CD4-positive, alpha-beta memory T cell (primary cell): ENCODE measurements at regions of chr7 and their contacts with region 1.

Region 1: DNA sequence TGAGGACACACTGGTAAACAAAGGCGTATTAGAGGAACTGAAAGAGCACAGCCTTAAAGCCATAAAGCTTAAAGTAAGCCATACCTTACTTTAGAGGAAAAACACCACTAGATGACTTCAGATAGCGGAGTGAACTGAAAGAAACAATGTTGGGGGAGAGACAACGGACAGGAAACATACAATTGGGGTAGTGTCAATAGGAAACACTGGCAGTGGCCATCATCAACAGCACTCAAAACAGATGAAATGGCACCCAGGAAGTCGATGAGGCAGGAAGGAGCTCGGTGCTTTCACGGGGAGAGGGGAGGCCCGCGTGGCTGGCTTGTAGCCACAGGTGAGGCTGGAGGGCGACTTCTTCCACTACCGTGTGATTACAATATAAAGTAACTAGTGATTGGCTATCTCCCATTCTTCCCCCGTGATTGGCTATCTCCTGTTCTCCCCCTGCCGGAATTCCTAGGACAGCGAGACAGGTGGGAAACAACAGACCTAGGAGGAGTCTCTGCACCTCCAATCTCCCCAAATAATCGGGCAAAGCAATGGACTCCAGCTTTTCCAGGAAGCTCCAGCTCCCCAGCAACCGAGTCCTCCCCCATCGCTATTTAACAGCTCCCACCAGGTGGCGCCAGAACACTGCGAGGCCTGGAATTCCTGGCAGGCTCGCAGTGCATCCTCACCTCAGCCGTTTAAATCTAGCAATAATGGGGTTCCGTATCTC is 2.4 kb upstream of the TAS2R38 start:
- DNase-seq: peak; percentile 33 to 54 (median 51)
- H3K4me3 ChIP-seq: peak overlapping the region; percentile 24 to 49
- H3K4me3 Mint-ChIP-seq: peak overlapping the region; percentile 47 to 85 (median 81)
- H3K27ac ChIP-seq: no peak overlapping the region
- H3K27ac Mint-ChIP-seq: peak overlapping the region in 6 of 7 donors; percentile 0 to 86 (median 50)
- H3K4me1 ChIP-seq: peaks cover 9% of the 10 kb centered on the region
- H3K4me1 Mint-ChIP-seq: peaks cover 5 to 18% (median 9%) of the 10 kb centered on the region in 4 donors
- H3K27me3 ChIP-seq: no peaks in the 10 kb centered on the region
- H3K27me3 Mint-ChIP-seq: no peaks in the 10 kb centered on the region

Region 2: GRCh38 chr7:141960687-141961422 is 15.1 kb before region 1 on chr7:
- CTCF ChIA-PET with region 1: interaction called, 21 read pairs
- POLR2A ChIA-PET with region 1: no interaction called
- intact Hi-C with region 1: no loop called
- DNase-seq: no peak
- H3K4me3 ChIP-seq: no peak overlapping the region
- H3K4me3 Mint-ChIP-seq: no peak overlapping the region
- H3K27ac ChIP-seq: no peak overlapping the region
- H3K27ac Mint-ChIP-seq: no peak overlapping the region
- H3K4me1 ChIP-seq: no peaks in the 10 kb centered on the region
- H3K4me1 Mint-ChIP-seq: no peaks in the 10 kb centered on the region
- H3K27me3 ChIP-seq: no peaks in the 10 kb centered on the region
- H3K27me3 Mint-ChIP-seq: peaks cover 0 to 2% of the 10 kb centered on the region in 2 donors

Region 3: DNA sequence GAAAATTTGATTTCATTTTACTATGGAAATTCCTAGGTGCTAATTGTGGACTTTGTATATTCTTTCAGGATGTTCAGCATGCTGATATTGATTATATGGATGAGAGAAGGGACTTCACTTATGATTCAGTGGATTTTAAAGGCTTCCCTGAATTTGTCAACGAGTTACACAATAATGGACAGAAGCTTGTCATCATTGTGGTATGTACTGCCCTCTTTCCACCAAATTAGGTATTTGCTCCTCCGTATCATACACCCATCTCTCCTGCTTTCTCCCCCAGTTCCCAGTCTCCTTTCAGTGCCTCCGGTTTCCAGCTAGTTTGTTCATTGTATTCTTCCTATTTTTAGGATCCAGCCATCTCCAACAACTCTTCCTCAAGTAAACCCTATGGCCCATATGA is 54.3 kb after region 1 on chr7:
- CTCF ChIA-PET with region 1: interaction called, 12 read pairs
- POLR2A ChIA-PET with region 1: no interaction called
- intact Hi-C with region 1: no loop called
- DNase-seq: no peak
- H3K4me3 ChIP-seq: no peak overlapping the region
- H3K4me3 Mint-ChIP-seq: no peak overlapping the region
- H3K27ac ChIP-seq: no peak overlapping the region
- H3K27ac Mint-ChIP-seq: no peak overlapping the region
- H3K4me1 ChIP-seq: no peaks in the 10 kb centered on the region
- H3K4me1 Mint-ChIP-seq: no peaks in the 10 kb centered on the region
- H3K27me3 ChIP-seq: no peaks in the 10 kb centered on the region
- H3K27me3 Mint-ChIP-seq: peaks cover 2 to 9% of the 10 kb centered on the region in 2 donors

Region 4: GRCh38 chr7:142188846-142189245 is 212.9 kb after region 1 on chr7:
- CTCF ChIA-PET with region 1: no interaction called
- POLR2A ChIA-PET with region 1: no interaction called
- intact Hi-C with region 1: loop called (anchors 5 kb)
- DNase-seq: no peak
- H3K4me3 ChIP-seq: no peak overlapping the region
- H3K4me3 Mint-ChIP-seq: no peak overlapping the region
- H3K27ac ChIP-seq: no peak overlapping the region
- H3K27ac Mint-ChIP-seq: no peak overlapping the region
- H3K4me1 ChIP-seq: no peaks in the 10 kb centered on the region
- H3K4me1 Mint-ChIP-seq: no peaks in the 10 kb centered on the region
- H3K27me3 ChIP-seq: no peaks in the 10 kb centered on the region
- H3K27me3 Mint-ChIP-seq: peaks cover 2 to 3% of the 10 kb centered on the region in 2 donors

Region 5: GRCh38 chr7:142301923-142302550 is 326.1 kb after region 1 on chr7:
- CTCF ChIA-PET with region 1: interaction called, 51 read pairs
- POLR2A ChIA-PET with region 1: no interaction called
- intact Hi-C with region 1: loop called (anchors 1 kb)
- DNase-seq: no peak
- H3K4me3 ChIP-seq: no peak overlapping the region
- H3K4me3 Mint-ChIP-seq: no peak overlapping the region
- H3K27ac ChIP-seq: no peak overlapping the region
- H3K27ac Mint-ChIP-seq: no peak overlapping the region
- H3K4me1 ChIP-seq: peaks cover 8% of the 10 kb centered on the region
- H3K4me1 Mint-ChIP-seq: peaks cover 14 to 28% (median 18%) of the 10 kb centered on the region in 4 donors
- H3K27me3 ChIP-seq: no peaks in the 10 kb centered on the region
- H3K27me3 Mint-ChIP-seq: peaks cover 15 to 18% of the 10 kb centered on the region in 2 donors

Region 6: DNA sequence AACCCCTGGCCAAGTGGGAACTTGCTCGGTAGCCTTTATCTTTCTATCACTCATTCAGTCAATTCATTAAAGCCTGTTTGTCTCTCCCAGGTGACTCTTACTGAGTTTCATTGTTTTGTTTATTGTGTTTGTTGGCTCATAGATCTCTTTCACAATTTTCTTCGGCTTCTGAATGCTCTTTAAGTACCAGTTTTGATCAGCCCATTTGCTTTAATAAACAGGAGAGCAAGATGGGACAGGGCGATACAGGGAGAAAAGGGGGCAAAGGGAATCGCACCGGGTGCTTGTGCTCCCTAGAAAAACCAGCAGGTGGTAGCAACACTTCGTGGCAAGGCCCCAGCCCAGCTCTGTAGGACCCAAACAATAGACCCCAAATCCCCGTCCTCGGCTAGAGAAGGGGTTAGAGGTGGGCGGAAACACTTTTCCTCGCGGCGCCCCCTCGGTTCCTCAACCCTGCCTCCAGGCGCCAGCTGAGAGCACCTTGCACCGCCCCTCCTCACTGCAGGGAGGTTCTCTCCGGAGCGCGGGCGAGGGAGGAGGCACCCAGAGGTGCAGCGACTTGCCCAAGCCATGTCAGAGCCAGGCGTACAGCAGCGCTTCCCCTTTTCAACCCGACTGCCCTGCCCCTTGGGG is 877.9 kb after region 1 on chr7:
- CTCF ChIA-PET with region 1: no interaction called
- POLR2A ChIA-PET with region 1: no interaction called
- intact Hi-C with region 1: loop called (anchors 10 kb)
- DNase-seq: peak; percentile 63 to 72 (median 71)
- H3K4me3 ChIP-seq: peak overlapping the region; percentile 81 to 90
- H3K4me3 Mint-ChIP-seq: peak overlapping the region; percentile 93 to 98 (median 97)
- H3K27ac ChIP-seq: peak overlapping the region; percentile 27
- H3K27ac Mint-ChIP-seq: peak overlapping the region; percentile 86 to 96 (median 92)
- H3K4me1 ChIP-seq: peaks cover 24% of the 10 kb centered on the region
- H3K4me1 Mint-ChIP-seq: peaks cover 12 to 34% (median 19%) of the 10 kb centered on the region in 4 donors
- H3K27me3 ChIP-seq: no peaks in the 10 kb centered on the region
- H3K27me3 Mint-ChIP-seq: peaks cover 3% of the 10 kb centered on the region in 2 donors